H1 (cell line): ENCODE measurements at regions of chr16 and their contacts with region 1.

Region 1: GRCh38 chr16:12271006-12271405 is 294.5 kb downstream of the SNX29 start:
- DNase-seq: peak; percentile 31 to 54
- H3K4me3 ChIP-seq: no peak overlapping the region
- H3K27ac ChIP-seq: no peak overlapping the region
- H3K4me1 ChIP-seq: no peaks in the 10 kb centered on the region
- H3K27me3 ChIP-seq: no peaks in the 10 kb centered on the region
- CTCF ChIP-seq: peak; percentile 72 to 81 (median 78)
- EP300 ChIP-seq: no peak
- POLR2A ChIP-seq: no peak
- RAD21 ChIP-seq: peak; percentile 72 to 84

Region 2: GRCh38 chr16:12283596-12283995 is 12.6 kb after region 1 on chr16:
- CTCF ChIA-PET with region 1: interaction called, 20 read pairs
- POLR2A ChIA-PET with region 1: no interaction called
- DNase-seq: no peak
- H3K4me3 ChIP-seq: no peak overlapping the region
- H3K27ac ChIP-seq: no peak overlapping the region
- H3K4me1 ChIP-seq: no peaks in the 10 kb centered on the region
- H3K27me3 ChIP-seq: no peaks in the 10 kb centered on the region
- CTCF ChIP-seq: no peak
- EP300 ChIP-seq: no peak
- POLR2A ChIP-seq: no peak
- RAD21 ChIP-seq: no peak